Heart left ventricle (tissue), 16 donors: ENCODE measurements at regions of chr15 and their contacts with region 1.

Region 1: DNA sequence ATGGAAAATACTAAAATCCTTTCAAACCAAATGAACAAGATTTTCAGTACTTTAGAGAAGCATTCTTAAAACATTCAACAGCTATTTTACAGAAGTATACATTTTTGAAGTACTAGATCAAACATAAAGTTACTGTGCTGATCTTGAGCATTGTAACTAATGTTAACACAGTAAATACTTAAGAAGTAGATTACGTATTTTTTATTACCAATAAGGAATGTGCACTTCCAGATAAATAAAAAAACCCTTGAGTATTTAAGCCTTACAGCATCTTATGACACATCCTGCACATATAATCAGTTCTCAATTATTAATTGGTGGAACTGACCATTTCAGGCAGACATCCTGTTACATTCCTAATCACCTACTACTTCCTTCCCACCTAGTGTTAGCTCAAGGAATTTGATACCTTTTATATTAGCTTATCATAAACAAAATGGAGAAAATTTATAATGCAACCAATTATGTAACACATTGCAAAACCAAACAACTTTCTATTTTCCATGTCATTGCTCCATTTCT is 32.8 kb downstream of the COPS2 start:
- DNase-seq: no peak
- ATAC-seq: no peak
- H3K4me3 ChIP-seq: no peak overlapping the region
- H3K27ac ChIP-seq: no peak overlapping the region
- H3K4me1 ChIP-seq: peaks cover 0 to 7% (median 0%) of the 10 kb centered on the region in 12 donors
- H3K27me3 ChIP-seq: no peaks in the 10 kb centered on the region
- CTCF ChIP-seq: no peak
- POLR2A ChIP-seq: no peak

Region 2: GRCh38 chr15:49023354-49023753 is 99.2 kb before region 1 on chr15:
- intact Hi-C with region 1: loop called in 1 of 10 experiments (anchors 10 kb)
- DNase-seq: no peak
- ATAC-seq: no peak
- H3K4me3 ChIP-seq: no peak overlapping the region
- H3K27ac ChIP-seq: no peak overlapping the region
- H3K4me1 ChIP-seq: no peaks in the 10 kb centered on the region
- H3K27me3 ChIP-seq: no peaks in the 10 kb centered on the region
- CTCF ChIP-seq: no peak
- POLR2A ChIP-seq: no peak